ENCODE measurements at regions of chr2 and their contacts with region 1.

Region 1: GRCh38 chr2:71068218-71069035 is at the start of gene NAGK:
- DNase-seq: peak; percentile 99

Region 2: GRCh38 chr2:70935468-70936164 is 132.8 kb before region 1 on chr2 and contains the start of gene ATP6V1B1:
- CTCF ChIA-PET with region 1: no interaction called
- POLR2A ChIA-PET with region 1: no interaction called
- DNase-seq: no peak

Region 3: GRCh38 chr2:71000780-71001591 is 67.4 kb before region 1 on chr2:
- CTCF ChIA-PET with region 1: interaction called, 5 read pairs
- POLR2A ChIA-PET with region 1: interaction called, 19 read pairs
- DNase-seq: peak; percentile 86

Region 4: GRCh38 chr2:71045865-71046548 is 22.4 kb before region 1 on chr2:
- CTCF ChIA-PET with region 1: no interaction called
- POLR2A ChIA-PET with region 1: interaction called, 19 read pairs
- DNase-seq: no peak

Region 5: GRCh38 chr2:71078624-71079023 is 10.2 kb after region 1 on chr2:
- CTCF ChIA-PET with region 1: interaction called, 4 read pairs
- POLR2A ChIA-PET with region 1: interaction called, 38 read pairs
- DNase-seq: no peak

Region 6: GRCh38 chr2:71100195-71100964 is 32.0 kb after region 1 on chr2:
- CTCF ChIA-PET with region 1: interaction called, 3 read pairs
- POLR2A ChIA-PET with region 1: interaction called, 11 read pairs
- DNase-seq: peak; percentile 83

Region 7: DNA sequence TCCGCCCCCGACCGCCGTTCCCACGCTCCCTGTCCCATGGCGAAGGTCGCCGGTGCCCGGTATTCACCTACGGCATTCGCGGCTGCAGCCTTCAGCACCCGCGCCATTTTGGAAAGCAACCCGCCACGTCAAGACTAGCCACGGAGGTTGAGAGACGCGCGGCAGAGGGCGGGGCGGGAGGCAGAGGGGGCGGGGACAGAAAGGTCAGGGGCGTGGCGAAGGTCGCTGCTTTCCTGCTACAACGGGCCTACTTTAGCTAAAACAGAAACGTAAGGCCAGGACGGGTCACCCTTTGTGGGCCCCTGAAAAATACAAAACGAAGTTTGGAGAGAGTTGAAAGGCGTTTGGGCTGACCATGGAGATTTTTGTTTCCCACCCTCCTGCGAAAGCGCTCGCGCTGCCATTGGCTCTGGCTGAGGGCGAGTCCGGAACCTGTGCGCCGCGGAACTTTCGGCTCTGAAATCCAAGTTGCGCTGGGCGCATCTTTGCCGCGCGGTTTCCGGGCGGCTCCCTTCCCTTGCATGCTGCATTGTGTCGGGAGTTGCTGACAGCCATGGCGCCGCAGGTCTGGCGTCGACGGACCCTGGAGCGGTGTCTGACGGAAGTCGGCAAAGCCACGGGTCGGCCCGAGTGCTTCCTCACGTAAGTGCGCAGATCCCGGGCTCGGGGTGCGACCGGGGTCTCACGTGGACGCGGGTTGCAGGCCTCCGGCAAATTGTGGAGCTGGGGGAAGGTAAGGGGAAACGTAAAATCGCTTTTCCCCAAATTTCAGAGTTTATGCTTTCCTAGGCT is 61.9 kb after region 1 on chr2 and contains the starts of genes MCEE and MPHOSPH10:
- CTCF ChIA-PET with region 1: no interaction called
- POLR2A ChIA-PET with region 1: interaction called, 17 read pairs
- DNase-seq: peak; percentile 88

Region 8: DNA sequence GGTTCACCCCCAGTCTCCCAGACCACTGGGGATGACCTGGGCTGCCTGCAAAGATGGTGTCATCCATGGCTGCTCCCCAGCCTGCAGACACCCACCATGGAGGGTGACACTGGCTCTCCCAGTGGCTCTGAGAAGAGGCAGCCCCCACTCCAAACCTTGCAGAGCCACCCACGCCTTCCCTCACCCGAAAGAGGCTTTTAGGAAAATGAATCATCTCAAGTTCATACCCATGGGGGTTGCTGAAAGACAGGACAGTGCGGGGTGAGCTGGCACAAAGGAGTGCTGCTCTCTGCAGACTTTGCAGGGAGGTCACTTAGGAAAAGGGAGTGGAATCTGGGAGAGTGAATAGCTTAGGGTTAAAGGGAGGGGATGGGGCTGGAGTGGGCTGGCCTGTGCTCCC is 98.4 kb after region 1 on chr2:
- CTCF ChIA-PET with region 1: no interaction called
- POLR2A ChIA-PET with region 1: no interaction called
- DNase-seq: no peak

Measured in HEK293T (cell line).